Mammary epithelial cell (primary cell): ENCODE measurements at regions of chr4 and their contacts with region 1.

Region 1: DNA sequence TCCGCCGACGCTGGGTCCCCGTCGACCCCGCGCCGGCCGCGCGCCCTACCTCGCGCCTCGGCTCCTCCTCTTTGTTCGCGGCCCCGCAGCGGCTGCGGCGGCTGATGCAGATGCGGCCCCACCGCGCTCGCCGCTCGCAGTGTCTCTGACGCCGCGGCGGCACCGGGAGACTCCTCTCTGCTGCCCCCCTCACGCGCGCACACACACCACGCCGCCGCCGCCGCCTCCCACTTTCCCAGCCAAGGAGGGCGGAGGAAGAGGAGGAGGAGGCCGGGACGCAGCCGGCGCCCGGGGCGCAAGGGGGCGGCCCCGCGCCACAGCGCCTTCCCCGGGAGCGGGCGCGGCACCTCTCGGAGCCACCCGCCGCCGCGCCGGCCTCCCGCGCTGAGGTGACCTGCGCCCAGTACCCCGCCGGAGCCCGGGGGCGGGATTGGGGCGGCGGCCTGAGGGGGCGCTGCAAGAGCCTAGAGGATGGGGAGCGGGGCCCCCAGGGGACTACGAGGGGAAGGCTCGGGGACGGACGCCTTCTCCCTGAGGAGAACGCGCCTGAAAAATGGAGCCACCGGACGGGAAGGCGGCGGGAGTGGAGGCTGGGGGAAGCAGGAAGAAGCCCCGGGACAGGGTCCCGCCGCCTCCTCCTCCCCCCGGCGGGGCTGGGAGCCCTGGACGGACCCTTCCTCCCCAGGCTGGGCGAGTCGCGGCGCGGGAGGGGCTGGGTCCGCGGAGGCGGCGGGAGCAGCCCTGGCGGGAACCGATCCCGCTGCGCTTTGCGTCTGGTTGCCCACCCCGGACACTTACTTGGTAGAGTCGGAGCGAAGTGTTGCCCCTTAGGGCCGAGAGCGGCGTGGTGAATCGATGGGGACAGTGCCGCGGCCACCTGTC is at the start of gene SH3RF1:
- DNase-seq: peak; percentile 90
- H3K4me3 ChIP-seq: peak within 1 kb of the TSS; percentile 71 to 95 (median 75)
- H3K27ac ChIP-seq: peak within 1 kb of the TSS; percentile 89
- H3K4me1 ChIP-seq: peaks cover 26% of the 10 kb centered on the region
- H3K27me3 ChIP-seq: no peaks in the 10 kb centered on the region
- CTCF ChIP-seq: peak in 1 of 2 donors; percentile 11
- total RNA-seq, gene SH3RF1: 30.8 to 38.2 TPM

Region 2: DNA sequence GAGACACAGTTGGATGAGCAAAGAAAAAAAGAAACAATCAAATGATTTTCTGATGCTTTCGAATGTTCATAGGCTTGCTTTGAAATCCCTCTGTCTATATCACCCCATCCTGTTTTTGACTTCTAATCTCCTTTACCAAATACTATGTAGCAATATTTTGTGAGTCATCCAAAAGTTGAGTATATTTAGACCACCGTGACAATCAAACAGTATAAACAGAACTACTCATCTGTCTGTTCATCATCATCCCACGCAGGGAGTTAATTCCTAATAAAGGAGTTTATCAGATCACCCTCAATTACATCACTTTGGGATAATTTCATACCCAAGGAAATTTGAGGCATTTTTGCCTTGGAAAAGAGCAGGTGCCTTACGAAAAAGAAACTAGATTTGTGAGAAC is 473.9 kb before region 1 on chr4:
- CTCF ChIA-PET with region 1: no interaction called
- dilution Hi-C with region 1: no loop called
- in situ Hi-C with region 1: no loop called
- intact Hi-C with region 1: no loop called
- DNase-seq: peak; percentile 84
- H3K4me3 ChIP-seq: no peak overlapping the region
- H3K27ac ChIP-seq: peak overlapping the region; percentile 87
- H3K4me1 ChIP-seq: peaks cover 28% of the 10 kb centered on the region
- H3K27me3 ChIP-seq: no peaks in the 10 kb centered on the region
- CTCF ChIP-seq: no peak

Region 3: GRCh38 chr4:168923526-168924194 is 347.4 kb before region 1 on chr4:
- CTCF ChIA-PET with region 1: no interaction called
- dilution Hi-C with region 1: no loop called
- in situ Hi-C with region 1: no loop called
- intact Hi-C with region 1: loop called (anchors 1 kb)
- DNase-seq: peak; percentile 42
- H3K4me3 ChIP-seq: no peak overlapping the region
- H3K27ac ChIP-seq: no peak overlapping the region
- H3K4me1 ChIP-seq: no peaks in the 10 kb centered on the region
- H3K27me3 ChIP-seq: no peaks in the 10 kb centered on the region
- CTCF ChIP-seq: peak; percentile 58 to 71

Region 4: GRCh38 chr4:169024762-169025161 is 246.3 kb before region 1 on chr4:
- CTCF ChIA-PET with region 1: no interaction called
- dilution Hi-C with region 1: no loop called
- in situ Hi-C with region 1: loop called in 1 of 2 experiments (anchors 25 kb)
- intact Hi-C with region 1: loop called (anchors 2 kb)
- DNase-seq: peak; percentile 34
- H3K4me3 ChIP-seq: no peak overlapping the region
- H3K27ac ChIP-seq: no peak overlapping the region
- H3K4me1 ChIP-seq: no peaks in the 10 kb centered on the region
- H3K27me3 ChIP-seq: no peaks in the 10 kb centered on the region
- CTCF ChIP-seq: peak; percentile 69 to 77

Region 5: DNA sequence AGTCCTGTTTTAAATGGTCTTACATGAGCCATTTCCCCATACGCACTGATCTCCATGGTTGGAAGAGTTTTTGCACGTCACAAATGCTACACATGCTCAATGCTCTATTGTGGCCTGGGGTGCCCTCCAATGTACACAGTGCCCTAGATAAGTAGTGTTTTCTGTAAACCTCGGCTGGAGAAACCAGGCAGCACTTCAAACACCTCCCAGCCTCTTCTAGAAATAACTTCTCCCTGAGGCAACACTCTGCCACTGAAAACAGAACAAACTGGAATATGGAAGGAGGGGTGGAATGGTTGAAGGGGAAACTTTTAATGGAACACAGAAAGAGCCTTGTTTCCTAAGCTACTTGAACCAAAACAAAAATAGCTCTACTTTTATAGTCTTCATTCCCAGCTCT is 137.1 kb before region 1 on chr4:
- CTCF ChIA-PET with region 1: no interaction called
- dilution Hi-C with region 1: no loop called
- in situ Hi-C with region 1: no loop called
- intact Hi-C with region 1: loop called (anchors 5 kb)
- DNase-seq: no peak
- H3K4me3 ChIP-seq: no peak overlapping the region
- H3K27ac ChIP-seq: no peak overlapping the region
- H3K4me1 ChIP-seq: no peaks in the 10 kb centered on the region
- H3K27me3 ChIP-seq: no peaks in the 10 kb centered on the region
- CTCF ChIP-seq: no peak

Region 6: DNA sequence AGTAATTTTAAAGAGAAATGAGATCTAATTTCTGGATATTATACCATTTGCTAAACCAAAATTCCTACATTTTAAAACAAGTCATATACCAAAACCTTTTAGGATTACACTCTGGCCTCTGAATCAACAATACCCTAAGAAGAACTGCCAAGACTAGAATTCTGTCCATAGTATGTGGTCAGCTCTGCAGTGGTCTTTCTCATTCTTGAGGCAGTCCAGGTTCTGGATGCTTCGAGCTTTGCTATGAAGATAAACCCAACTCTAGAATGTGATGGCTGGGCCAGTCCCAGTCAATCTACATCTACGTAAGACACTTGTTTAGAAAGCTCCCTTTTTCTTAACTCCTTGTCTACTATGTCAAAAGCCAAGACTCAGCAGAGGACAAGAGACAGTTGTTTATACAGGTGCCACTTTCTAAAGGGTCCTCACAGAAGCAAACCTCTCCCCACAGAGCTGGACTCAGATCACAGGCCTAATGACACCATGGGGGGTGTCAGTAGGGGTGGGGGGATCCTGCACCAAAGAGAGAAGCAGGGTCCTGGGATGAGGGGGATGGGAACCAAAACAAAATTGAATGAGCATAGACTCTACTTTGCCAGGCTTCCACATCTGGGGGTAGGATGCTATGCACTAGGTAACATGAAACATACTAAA is 63.5 kb before region 1 on chr4:
- CTCF ChIA-PET with region 1: no interaction called
- dilution Hi-C with region 1: no loop called
- in situ Hi-C with region 1: no loop called
- intact Hi-C with region 1: loop called (anchors 2 kb)
- DNase-seq: no peak
- H3K4me3 ChIP-seq: no peak overlapping the region
- H3K27ac ChIP-seq: no peak overlapping the region
- H3K4me1 ChIP-seq: peaks cover 3% of the 10 kb centered on the region
- H3K27me3 ChIP-seq: no peaks in the 10 kb centered on the region
- CTCF ChIP-seq: no peak

Region 7: GRCh38 chr4:169231647-169232262 is 39.3 kb before region 1 on chr4:
- CTCF ChIA-PET with region 1: no interaction called
- dilution Hi-C with region 1: no loop called
- in situ Hi-C with region 1: no loop called
- intact Hi-C with region 1: loop called (anchors 1 kb)
- DNase-seq: peak; percentile 89
- H3K4me3 ChIP-seq: no peak overlapping the region
- H3K27ac ChIP-seq: peak overlapping the region; percentile 80
- H3K4me1 ChIP-seq: peaks cover 63% of the 10 kb centered on the region
- H3K27me3 ChIP-seq: no peaks in the 10 kb centered on the region
- CTCF ChIP-seq: no peak

Region 8: DNA sequence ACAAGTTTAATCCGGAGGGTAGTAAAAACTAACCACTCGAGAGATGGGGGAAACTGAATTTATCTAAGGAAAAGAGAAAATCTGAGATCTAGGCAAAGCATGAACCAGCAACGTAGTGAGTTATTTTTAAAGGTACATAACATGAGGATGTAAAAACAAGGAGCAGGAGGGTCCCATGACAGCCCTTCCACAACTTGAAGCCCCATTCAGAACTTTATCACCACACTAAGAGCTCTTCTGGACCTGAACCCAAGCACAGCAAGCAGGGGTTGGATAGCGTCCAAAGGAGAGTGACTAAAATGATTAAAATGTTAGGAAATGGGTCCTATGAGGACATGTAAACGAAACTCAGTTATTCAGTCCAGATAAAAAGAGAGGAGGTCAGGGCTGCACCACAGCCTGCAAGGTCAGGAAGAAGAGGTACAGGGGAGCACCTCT is 16.5 kb before region 1 on chr4:
- CTCF ChIA-PET with region 1: no interaction called
- dilution Hi-C with region 1: no loop called
- in situ Hi-C with region 1: no loop called
- intact Hi-C with region 1: no loop called
- DNase-seq: peak; percentile 45
- H3K4me3 ChIP-seq: no peak overlapping the region
- H3K27ac ChIP-seq: peak overlapping the region; percentile 36
- H3K4me1 ChIP-seq: peaks cover 60% of the 10 kb centered on the region
- H3K27me3 ChIP-seq: no peaks in the 10 kb centered on the region
- CTCF ChIP-seq: no peak

Region 9: GRCh38 chr4:169398316-169398715 is 127.3 kb after region 1 on chr4:
- CTCF ChIA-PET with region 1: no interaction called
- dilution Hi-C with region 1: no loop called
- in situ Hi-C with region 1: no loop called
- intact Hi-C with region 1: loop called (anchors 5 kb)
- DNase-seq: peak; percentile 83
- H3K4me3 ChIP-seq: no peak overlapping the region
- H3K27ac ChIP-seq: peak overlapping the region; percentile 87
- H3K4me1 ChIP-seq: peaks cover 8% of the 10 kb centered on the region
- H3K27me3 ChIP-seq: no peaks in the 10 kb centered on the region
- CTCF ChIP-seq: no peak